ENCODE measurements at regions of chr6 and their contacts with region 1.

Region 1: GRCh38 chr6:1686117-1687098 is 76.7 kb downstream of the FOXC1 start:
- DNase-seq: peak; percentile 77
- H3K4me3 ChIP-seq: 0 out of 2 replicates have a peak overlapping the region, but pooled peaks have one; percentile 7
- H3K27ac ChIP-seq: peak overlapping the region; percentile 75
- H3K27me3 ChIP-seq: no peaks in the 10 kb centered on the region
- CTCF ChIP-seq: peak; percentile 46

Region 2: DNA sequence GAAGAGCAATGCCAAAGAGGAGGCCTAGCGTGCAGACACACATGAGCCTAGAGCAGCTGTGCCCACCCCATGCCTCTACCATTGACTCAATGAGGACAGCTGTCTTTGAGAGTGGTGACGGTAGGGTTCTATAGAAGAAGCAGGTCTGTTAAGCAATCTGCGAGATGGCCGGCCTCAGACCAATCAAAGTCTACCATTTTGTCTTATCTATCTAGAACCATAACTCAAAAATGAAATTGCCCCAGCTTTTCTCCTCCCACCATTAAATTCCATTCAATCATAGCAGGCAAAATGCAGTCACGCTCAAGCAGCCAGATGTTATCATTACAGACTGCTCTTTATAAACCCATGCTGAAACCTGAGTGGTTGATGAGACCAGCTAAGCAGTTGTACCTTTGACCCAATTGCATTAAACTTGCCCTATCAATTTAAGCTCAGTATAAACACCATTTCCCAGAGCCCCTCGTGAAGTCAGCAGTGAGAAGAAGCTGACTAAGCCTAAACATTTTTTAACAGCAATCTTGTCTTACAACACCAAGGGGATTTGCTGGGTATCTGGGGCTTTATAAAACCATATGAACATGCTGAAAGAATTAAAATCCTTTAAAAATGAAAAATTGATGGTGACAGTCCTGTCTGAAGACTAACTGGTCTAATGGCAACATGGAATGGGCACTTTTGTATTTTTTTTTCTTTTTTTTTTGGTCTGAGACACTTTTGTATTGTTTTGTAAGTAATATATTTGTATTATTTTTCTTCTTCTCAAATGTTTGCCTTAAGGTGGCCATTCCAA is 19.2 kb before region 1 on chr6:
- CTCF ChIA-PET with region 1: interaction called, 5 read pairs
- POLR2A ChIA-PET with region 1: interaction called, 13 read pairs
- DNase-seq: peak; percentile 86
- H3K4me3 ChIP-seq: no peak overlapping the region
- H3K27ac ChIP-seq: no peak overlapping the region
- H3K27me3 ChIP-seq: no peaks in the 10 kb centered on the region
- CTCF ChIP-seq: no peak

Region 3: GRCh38 chr6:1701668-1702353 is 15.4 kb after region 1 on chr6:
- CTCF ChIA-PET with region 1: interaction called, 20 read pairs
- POLR2A ChIA-PET with region 1: no interaction called
- DNase-seq: peak; percentile 61
- H3K4me3 ChIP-seq: no peak overlapping the region
- H3K27ac ChIP-seq: peak overlapping the region; percentile 87
- H3K27me3 ChIP-seq: no peaks in the 10 kb centered on the region
- CTCF ChIP-seq: no peak

Region 4: GRCh38 chr6:1987640-1988039 is 301.2 kb after region 1 on chr6:
- CTCF ChIA-PET with region 1: no interaction called
- POLR2A ChIA-PET with region 1: no interaction called
- DNase-seq: peak; percentile 32
- H3K4me3 ChIP-seq: no peak overlapping the region
- H3K27ac ChIP-seq: no peak overlapping the region
- H3K27me3 ChIP-seq: no peaks in the 10 kb centered on the region
- CTCF ChIP-seq: no peak